Activated CD4-positive, alpha-beta T cell treated with anti-CD3 and anti-CD28 coated beads for 36 hours (primary cell): ENCODE measurements at regions of chr12 and their contacts with region 1.

Region 1: GRCh38 chr12:6752921-6753771 is at the start of gene MLF2:
- DNase-seq: peak; percentile 99
- ATAC-seq: peak; percentile 96
- H3K4me3 Mint-ChIP-seq: peak within 1 kb of the TSS; percentile 87
- H3K27ac Mint-ChIP-seq: peak within 1 kb of the TSS; percentile 97
- H3K4me1 Mint-ChIP-seq: peaks cover 26% of the 10 kb centered on the region
- H3K27me3 Mint-ChIP-seq: no peaks in the 10 kb centered on the region
- total RNA-seq, gene MLF2: 142 to 144 TPM

Region 2: GRCh38 chr12:6662906-6663742 is 90.0 kb before region 1 on chr12 and contains the start of gene ING4:
- CTCF ChIA-PET with region 1: no interaction called
- POLR2A ChIA-PET with region 1: no interaction called
- intact Hi-C with region 1: loop called in 1 of 2 experiments (anchors 1 kb)
- DNase-seq: peak; percentile 98
- ATAC-seq: peak; percentile 98
- H3K4me3 Mint-ChIP-seq: peak within 1 kb of the TSS; percentile 84
- H3K27ac Mint-ChIP-seq: peak within 1 kb of the TSS; percentile 91
- H3K4me1 Mint-ChIP-seq: peaks cover 24% of the 10 kb centered on the region
- H3K27me3 Mint-ChIP-seq: no peaks in the 10 kb centered on the region
- total RNA-seq, gene ING4: 14.9 to 17.6 TPM

Region 3: GRCh38 chr12:6764011-6764828 is 11.1 kb after region 1 on chr12:
- CTCF ChIA-PET with region 1: interaction called, 17 read pairs
- POLR2A ChIA-PET with region 1: interaction called, 4 read pairs
- intact Hi-C with region 1: loop called in 1 of 2 experiments (anchors 1 kb)
- DNase-seq: peak; percentile 68
- ATAC-seq: peak; percentile 80
- H3K4me3 Mint-ChIP-seq: peak overlapping the region; percentile 28
- H3K27ac Mint-ChIP-seq: peak overlapping the region; percentile 44
- H3K4me1 Mint-ChIP-seq: peaks cover 28% of the 10 kb centered on the region
- H3K27me3 Mint-ChIP-seq: peaks cover 33% of the 10 kb centered on the region

Region 4: GRCh38 chr12:6792522-6793201 is 39.5 kb after region 1 on chr12:
- CTCF ChIA-PET with region 1: interaction called, 29 read pairs
- POLR2A ChIA-PET with region 1: interaction called, 6 read pairs
- intact Hi-C with region 1: loop called (anchors 1 to 5 kb)
- DNase-seq: peak; percentile 52
- ATAC-seq: peak; percentile 20
- H3K4me3 Mint-ChIP-seq: peak overlapping the region; percentile 89
- H3K27ac Mint-ChIP-seq: peak overlapping the region; percentile 93
- H3K4me1 Mint-ChIP-seq: peaks cover 56% of the 10 kb centered on the region
- H3K27me3 Mint-ChIP-seq: no peaks in the 10 kb centered on the region

Region 5: GRCh38 chr12:6833189-6833890 is 80.2 kb after region 1 on chr12:
- CTCF ChIA-PET with region 1: interaction called, 54 read pairs
- POLR2A ChIA-PET with region 1: no interaction called
- intact Hi-C with region 1: no loop called
- DNase-seq: no peak
- ATAC-seq: no peak
- H3K4me3 Mint-ChIP-seq: no peak overlapping the region
- H3K27ac Mint-ChIP-seq: no peak overlapping the region
- H3K4me1 Mint-ChIP-seq: peaks cover 13% of the 10 kb centered on the region
- H3K27me3 Mint-ChIP-seq: peaks cover 7% of the 10 kb centered on the region

Region 6: DNA sequence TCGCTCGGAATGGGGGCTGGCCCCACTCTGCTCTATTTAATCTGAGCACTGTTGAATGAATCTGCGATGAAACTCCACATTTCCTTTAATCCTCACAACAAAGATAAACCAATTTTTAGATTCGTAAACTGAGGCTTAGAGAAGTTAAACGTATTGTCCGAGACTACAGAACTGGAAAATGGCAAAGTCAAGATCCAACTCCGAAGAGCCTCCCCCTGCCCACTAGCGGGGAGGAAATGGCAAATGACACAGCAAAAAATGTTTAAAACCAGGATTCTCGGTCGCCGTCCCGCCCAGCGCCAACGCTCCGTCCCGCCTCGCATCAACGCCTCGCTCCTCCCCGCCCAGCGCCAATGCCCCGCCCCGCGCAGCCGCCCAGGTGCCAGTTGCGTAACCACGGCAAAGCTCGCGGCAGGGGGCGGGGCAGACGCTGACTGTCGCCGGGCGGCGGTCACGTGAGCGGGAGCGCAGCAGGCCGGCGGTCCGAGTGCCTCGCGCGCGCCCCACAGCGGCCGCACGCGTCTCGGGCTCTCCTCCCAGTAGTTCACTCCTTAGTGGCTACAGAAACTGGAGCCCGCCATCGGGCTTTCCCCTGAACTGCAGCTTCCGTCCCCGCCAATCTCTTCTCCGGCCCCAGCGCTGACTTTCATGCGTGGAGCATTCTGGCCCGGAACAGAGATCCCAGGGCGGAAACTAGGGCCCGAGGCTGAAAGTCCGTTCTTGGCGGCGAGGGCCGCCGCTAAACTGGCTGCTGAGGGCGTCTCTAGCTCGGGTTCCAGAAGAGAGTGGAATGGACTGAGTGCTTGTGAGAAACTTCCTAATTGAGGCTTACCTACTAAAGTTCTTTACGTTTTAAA is 137.9 kb after region 1 on chr12:
- CTCF ChIA-PET with region 1: interaction called, 4 read pairs
- POLR2A ChIA-PET with region 1: no interaction called
- intact Hi-C with region 1: loop called in 1 of 2 experiments (anchors 1 kb)
- DNase-seq: peak; percentile 100
- ATAC-seq: peak; percentile 94
- H3K4me3 Mint-ChIP-seq: peak overlapping the region; percentile 87
- H3K27ac Mint-ChIP-seq: peak overlapping the region; percentile 94
- H3K4me1 Mint-ChIP-seq: peaks cover 12% of the 10 kb centered on the region
- H3K27me3 Mint-ChIP-seq: no peaks in the 10 kb centered on the region